WTC11 (cell line): ENCODE measurements at regions of chr1 and their contacts with region 1.

Region 1: DNA sequence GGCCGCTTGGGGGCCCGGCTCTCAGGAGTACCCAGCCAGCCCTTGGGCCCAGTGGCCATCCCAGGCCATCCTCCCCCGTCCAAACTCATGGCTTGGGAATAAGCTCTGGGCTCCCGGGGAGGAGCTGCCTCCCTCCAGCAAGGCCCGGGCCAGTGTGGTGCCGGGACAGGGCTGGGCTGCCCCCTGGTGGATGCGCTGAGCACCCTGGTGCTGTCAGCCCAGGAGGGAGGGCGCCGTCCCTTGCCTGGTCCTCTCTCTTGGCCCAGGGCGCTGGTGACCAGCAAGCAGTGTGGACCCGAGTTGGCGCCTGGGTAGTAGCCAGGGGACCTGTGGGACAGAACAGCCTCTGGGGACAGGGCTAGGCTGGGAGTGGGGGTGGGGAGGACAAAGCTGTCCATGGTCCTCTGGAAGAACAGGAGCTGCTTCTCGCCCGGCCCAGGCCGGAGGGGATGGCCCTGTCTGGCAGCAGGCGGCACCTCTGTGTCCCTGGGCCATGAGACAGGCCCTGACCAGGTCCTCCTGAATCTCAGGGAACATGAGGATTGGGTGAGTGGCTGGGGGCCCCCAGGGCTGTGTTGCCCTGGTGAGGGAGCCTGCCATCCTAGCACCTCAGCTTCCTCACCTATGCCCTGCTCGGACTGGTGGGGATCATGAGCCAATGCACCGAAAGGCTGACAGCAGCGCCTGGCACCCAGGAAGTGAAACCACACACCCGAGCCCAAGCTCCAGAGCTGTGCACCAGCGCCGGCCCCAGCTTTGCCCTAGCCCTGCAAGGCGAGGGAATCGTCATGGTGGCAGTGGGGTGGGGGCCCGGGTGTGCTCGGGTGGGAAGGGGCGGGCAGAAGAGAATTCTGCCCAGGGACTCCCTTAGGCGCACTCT is 9.4 kb downstream of the MORN1 start:
- DNase-seq: peak; percentile 87
- ATAC-seq: peak; percentile 90
- H3K4me3 Mint-ChIP-seq: no peak overlapping the region
- H3K27ac Mint-ChIP-seq: no peak overlapping the region
- H3K4me1 Mint-ChIP-seq: no peaks in the 10 kb centered on the region
- H3K27me3 Mint-ChIP-seq: no peaks in the 10 kb centered on the region
- CTCF ChIP-seq: peak; percentile 77

Region 2: DNA sequence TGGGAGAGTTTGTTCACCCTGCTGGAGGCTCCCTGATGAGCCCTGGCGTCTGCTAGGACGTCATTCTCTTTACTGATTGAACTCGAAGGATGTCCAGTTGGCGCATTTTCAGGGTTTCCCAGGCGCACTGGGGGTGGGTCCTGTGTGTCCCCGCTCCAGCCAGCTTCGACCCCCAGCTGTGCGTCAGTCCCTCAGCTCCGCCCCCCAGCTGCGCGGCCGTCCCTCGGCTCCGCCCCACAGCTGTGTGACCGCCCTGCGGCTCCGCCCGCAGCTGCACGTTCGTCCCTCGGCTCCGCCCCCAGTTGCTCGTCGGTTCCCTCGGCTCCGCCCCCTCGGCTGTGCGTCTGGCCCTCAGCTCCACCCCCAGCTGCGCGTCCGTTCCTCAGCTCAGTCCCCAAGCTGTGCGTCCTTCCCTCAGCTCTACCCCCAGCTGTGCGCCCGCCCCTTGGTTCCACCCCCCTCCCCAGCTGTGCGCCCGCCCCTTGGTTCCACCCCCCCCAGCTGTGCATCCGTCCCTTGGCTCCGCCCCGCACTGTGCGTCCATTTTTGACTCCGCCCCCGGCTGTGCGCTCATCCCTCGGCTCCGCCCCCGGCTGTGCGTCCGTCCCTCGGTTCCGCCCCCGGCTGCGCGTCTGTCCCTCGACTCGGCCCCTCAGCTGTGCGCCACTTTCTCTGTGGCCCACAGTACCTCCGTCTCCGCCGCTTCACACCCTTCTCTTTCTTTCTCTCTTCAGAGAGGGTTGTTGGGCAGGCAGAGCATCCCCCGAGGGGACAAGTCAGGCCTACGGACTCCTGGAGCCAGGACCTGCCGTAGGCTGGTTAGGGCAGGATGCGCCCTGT is 248.7 kb before region 1 on chr1:
- CTCF ChIA-PET with region 1: interaction called, 10 read pairs
- POLR2A ChIA-PET with region 1: no interaction called
- DNase-seq: peak; percentile 99
- ATAC-seq: peak; percentile 91
- H3K4me3 Mint-ChIP-seq: peak overlapping the region; percentile 58
- H3K27ac Mint-ChIP-seq: peak overlapping the region; percentile 97
- H3K4me1 Mint-ChIP-seq: peaks cover 20% of the 10 kb centered on the region
- H3K27me3 Mint-ChIP-seq: no peaks in the 10 kb centered on the region; the same call in 1 of the 2 replicates
- CTCF ChIP-seq: no peak

Region 3: GRCh38 chr1:2194898-2195673 is 186.9 kb before region 1 on chr1:
- CTCF ChIA-PET with region 1: interaction called, 170 read pairs
- POLR2A ChIA-PET with region 1: interaction called, 6 read pairs
- DNase-seq: peak; percentile 92
- ATAC-seq: peak; percentile 73
- H3K4me3 Mint-ChIP-seq: peak overlapping the region; percentile 79
- H3K27ac Mint-ChIP-seq: peak overlapping the region; percentile 80; the same call in 1 of the 2 replicates
- H3K4me1 Mint-ChIP-seq: peaks cover 14% of the 10 kb centered on the region
- H3K27me3 Mint-ChIP-seq: no peaks in the 10 kb centered on the region; the same call in 1 of the 2 replicates
- CTCF ChIP-seq: peak; percentile 47; the same call in 1 of the 2 replicates

Region 4: GRCh38 chr1:2227346-2228153 is 154.4 kb before region 1 on chr1:
- CTCF ChIA-PET with region 1: interaction called, 10 read pairs
- POLR2A ChIA-PET with region 1: interaction called, 6 read pairs
- DNase-seq: peak; percentile 95
- ATAC-seq: peak; percentile 95
- H3K4me3 Mint-ChIP-seq: peak overlapping the region; percentile 37; the same call in 1 of the 2 replicates
- H3K27ac Mint-ChIP-seq: no peak overlapping the region
- H3K4me1 Mint-ChIP-seq: peaks cover 30% of the 10 kb centered on the region
- H3K27me3 Mint-ChIP-seq: no peaks in the 10 kb centered on the region
- CTCF ChIP-seq: no peak

Region 5: DNA sequence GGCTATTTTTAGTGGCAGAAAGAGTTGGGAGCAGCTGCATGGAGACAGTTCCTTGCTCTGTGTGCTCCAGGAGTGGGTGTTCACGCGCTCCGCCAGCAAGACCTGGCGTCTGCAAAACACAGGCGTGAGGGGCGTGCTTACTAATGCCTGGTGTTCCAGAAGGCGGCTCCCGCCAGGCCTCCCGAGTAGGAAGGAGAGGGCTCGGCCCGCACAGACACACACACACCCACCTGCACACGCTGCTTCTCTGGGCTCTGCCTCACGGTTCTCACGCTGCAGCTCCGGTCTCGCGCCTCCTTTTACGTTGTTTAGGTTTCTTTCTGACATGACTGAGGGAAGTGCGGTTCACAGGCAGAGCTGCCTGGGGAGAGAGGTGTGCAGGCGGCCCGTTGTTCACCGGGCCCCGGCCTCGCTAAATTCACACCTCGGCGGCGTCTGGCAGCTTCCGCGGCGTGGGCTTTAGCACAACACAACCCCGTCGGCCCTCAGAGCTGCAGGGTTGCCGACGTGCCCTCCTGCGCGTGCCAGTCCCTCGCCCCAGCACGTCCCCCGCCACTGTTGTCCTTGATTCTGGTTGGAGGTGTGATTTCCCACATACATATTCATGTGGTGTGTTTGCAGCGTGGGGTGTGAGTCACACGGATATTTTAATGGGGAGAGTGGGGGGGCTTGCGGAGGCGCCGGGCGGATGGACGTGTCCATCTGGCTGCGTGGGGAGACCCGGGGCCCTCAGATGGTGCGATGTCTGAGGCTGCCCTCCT is 76.9 kb before region 1 on chr1:
- CTCF ChIA-PET with region 1: interaction called, 98 read pairs
- POLR2A ChIA-PET with region 1: no interaction called
- DNase-seq: no peak
- ATAC-seq: no peak
- H3K4me3 Mint-ChIP-seq: no peak overlapping the region
- H3K27ac Mint-ChIP-seq: no peak overlapping the region
- H3K4me1 Mint-ChIP-seq: peaks cover 2% of the 10 kb centered on the region; the same call in 1 of the 2 replicates
- H3K27me3 Mint-ChIP-seq: no peaks in the 10 kb centered on the region
- CTCF ChIP-seq: no peak

Region 6: GRCh38 chr1:2352840-2353550 is 29.0 kb before region 1 on chr1:
- CTCF ChIA-PET with region 1: interaction called, 11 read pairs
- POLR2A ChIA-PET with region 1: no interaction called
- DNase-seq: no peak
- ATAC-seq: no peak
- H3K4me3 Mint-ChIP-seq: no peak overlapping the region
- H3K27ac Mint-ChIP-seq: no peak overlapping the region
- H3K4me1 Mint-ChIP-seq: no peaks in the 10 kb centered on the region
- H3K27me3 Mint-ChIP-seq: no peaks in the 10 kb centered on the region
- CTCF ChIP-seq: no peak